ENCODE measurements at regions of chr4 and their contacts with region 1.

Region 1: GRCh38 chr4:73019462-73020047 is 50.0 kb downstream of the COX18 start:
- DNase-seq: peak; percentile 19
- H3K4me3 ChIP-seq: no peak overlapping the region
- H3K27ac ChIP-seq: no peak overlapping the region
- H3K4me1 ChIP-seq: no peaks in the 10 kb centered on the region
- H3K27me3 ChIP-seq: peaks cover 2% of the 10 kb centered on the region
- CTCF ChIP-seq: peak; percentile 62 to 64

Region 2: DNA sequence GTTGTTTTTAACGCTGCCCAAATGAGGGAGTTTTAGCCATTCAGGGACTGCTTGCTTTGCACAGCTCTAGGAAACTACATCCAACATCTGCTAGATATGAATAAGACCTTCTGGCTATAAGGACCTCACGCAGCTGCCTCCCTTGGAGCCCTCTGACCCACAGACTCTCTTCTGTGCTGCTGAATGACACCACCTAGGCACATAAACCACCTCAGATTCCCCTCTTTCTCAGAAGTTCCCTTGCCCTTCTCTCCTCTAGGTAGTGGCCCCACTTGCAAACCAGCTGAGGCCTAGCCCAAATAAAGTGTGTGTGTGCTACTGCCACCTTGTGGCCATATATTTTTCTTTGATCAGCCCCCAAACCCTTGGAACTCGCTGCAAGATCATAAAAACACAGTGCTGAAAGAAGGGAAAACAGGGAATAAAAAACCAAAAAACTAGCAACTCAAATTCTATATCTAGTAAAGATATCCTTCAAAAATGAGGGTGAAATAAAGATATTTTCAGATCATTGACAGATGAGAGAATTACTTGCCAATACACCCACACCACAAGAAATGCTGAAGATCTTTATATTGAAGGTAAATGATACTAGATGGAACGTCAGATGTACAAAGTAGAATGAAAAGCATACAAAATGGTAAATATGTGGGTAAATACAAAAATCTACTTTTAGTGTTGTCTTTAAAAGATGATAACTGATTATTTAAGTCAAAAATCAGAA is 716.4 kb before region 1 on chr4:
- CTCF ChIA-PET with region 1: no interaction called
- dilution Hi-C with region 1: no loop called
- in situ Hi-C with region 1: loop called in 1 of 2 experiments (anchors 25 kb)
- intact Hi-C with region 1: loop called (anchors 5 kb)
- DNase-seq: peak; percentile 29
- H3K4me3 ChIP-seq: no peak overlapping the region
- H3K27ac ChIP-seq: no peak overlapping the region
- H3K4me1 ChIP-seq: no peaks in the 10 kb centered on the region
- H3K27me3 ChIP-seq: no peaks in the 10 kb centered on the region
- CTCF ChIP-seq: peak; percentile 62 to 66

Region 3: DNA sequence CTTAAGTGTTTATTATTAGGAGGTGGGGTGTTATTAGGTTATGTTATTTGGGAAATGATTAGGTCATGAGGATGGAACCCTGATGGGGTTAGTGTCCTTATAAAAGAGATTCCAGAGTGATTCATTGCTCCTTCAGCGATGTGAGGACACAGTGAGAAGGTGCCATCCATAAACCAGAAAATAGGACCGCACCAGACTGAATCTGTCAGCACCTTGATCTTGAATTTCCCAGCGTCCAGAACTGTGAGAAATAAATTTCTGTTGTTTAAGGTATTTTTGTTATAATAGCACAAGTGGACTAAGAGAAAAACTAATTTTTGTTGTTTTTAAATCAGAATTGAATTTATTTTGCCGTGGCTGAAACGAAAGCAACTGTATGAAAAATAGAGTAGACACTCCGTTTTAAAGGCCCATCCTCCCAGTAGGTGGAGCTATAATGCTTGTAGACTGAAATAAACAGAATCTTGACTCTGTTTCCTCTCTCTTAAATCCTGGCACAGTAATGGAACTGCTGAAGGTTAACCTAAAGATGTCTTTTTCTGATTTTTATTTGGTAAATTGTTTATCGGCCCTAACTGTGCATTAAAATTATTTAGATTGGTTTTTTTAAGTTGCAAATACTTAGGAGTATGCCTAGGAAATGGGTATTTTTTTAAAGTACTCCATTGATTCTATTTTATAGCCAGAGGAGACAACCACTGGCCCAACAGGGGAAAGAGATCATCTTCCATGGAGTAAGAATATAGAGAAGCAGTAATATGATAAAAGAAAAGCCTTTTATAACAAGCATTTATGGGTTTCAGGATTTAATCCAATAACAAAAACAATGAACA is 317.4 kb before region 1 on chr4:
- CTCF ChIA-PET with region 1: no interaction called
- dilution Hi-C with region 1: no loop called
- in situ Hi-C with region 1: loop called in 1 of 2 experiments (anchors 10 kb)
- intact Hi-C with region 1: loop called (anchors 1 kb)
- DNase-seq: peak; percentile 40
- H3K4me3 ChIP-seq: peak overlapping the region; percentile 39 to 75 (median 57)
- H3K27ac ChIP-seq: no peak overlapping the region
- H3K4me1 ChIP-seq: no peaks in the 10 kb centered on the region
- H3K27me3 ChIP-seq: no peaks in the 10 kb centered on the region
- CTCF ChIP-seq: peak; percentile 68

Region 4: DNA sequence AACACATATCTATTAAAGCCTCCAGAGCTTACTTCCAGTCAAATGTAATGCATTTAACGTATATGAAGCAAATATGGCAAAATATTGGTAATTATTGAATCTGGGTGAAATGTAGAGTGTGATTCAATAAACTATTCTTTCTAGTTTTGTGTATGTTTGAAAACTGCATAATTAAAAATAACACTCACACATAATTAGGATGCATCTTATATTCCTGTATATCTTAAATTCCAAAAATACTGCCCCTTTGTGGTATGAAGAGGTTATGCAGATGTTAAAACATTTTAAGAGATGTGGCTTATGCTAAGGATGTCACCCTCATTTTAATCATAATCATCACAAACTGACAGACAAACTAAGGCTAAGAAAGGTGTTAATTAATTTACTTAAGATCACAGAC is 133.0 kb before region 1 on chr4:
- CTCF ChIA-PET with region 1: no interaction called
- dilution Hi-C with region 1: no loop called
- in situ Hi-C with region 1: no loop called
- intact Hi-C with region 1: loop called (anchors 2 kb)
- DNase-seq: no peak
- H3K4me3 ChIP-seq: no peak overlapping the region
- H3K27ac ChIP-seq: no peak overlapping the region
- H3K4me1 ChIP-seq: no peaks in the 10 kb centered on the region
- H3K27me3 ChIP-seq: no peaks in the 10 kb centered on the region
- CTCF ChIP-seq: peak; percentile 44 to 51

Region 5: DNA sequence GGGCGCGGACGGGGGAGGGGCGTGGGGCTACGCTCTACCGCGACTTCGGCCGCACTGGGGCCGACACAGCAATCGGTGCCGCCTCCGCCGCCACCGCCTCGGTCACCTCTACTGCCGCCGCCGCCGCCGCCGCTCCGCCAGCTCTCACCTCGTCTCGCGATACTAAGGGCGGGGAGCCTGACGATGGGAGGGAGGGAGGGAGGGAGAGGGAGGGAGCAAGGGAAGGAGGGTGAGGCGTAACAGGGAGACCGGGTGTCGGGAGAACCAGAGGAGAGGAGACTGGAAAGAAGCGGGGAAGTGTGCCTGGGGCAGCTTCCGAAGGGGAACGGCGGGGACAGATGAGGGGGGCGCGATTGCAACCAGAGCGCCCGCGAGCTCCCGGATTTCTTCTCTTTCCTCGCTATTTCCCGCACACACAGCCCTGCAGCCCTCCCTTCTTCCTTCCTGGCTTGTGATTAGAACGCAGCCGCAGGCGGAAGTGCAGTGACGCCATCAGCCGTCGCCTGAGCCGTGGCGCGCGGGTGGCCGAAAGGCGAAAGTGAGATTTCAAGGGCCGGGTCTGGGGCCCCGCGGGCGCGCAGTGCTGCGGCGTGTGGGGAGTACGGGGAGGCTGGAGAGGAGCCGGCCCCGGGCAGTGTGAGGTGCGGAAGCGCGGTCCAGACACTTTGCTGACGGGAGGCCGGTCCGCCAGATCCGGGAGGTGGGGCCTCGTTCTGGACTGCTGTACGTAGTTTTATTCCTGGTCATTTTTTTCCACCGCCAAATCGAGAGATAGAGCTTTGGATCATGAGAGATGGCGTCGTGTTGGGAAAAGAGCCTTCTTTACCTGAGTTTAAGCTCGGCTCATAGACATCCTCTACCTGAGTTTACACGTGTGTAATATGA is 239.4 kb after region 1 on chr4 and contains the start of gene ANKRD17:
- CTCF ChIA-PET with region 1: no interaction called
- dilution Hi-C with region 1: no loop called
- in situ Hi-C with region 1: no loop called
- intact Hi-C with region 1: loop called (anchors 5 kb)
- DNase-seq: peak; percentile 94
- H3K4me3 ChIP-seq: peak within 1 kb of the TSS; percentile 70 to 97 (median 96)
- H3K27ac ChIP-seq: peak within 1 kb of the TSS; percentile 97
- H3K4me1 ChIP-seq: peaks cover 12% of the 10 kb centered on the region
- H3K27me3 ChIP-seq: no peaks in the 10 kb centered on the region
- CTCF ChIP-seq: peak in 1 of 2 donors; percentile 22
- total RNA-seq, gene ANKRD17: 66.2 to 70.6 TPM

Region 6: GRCh38 chr4:73299548-73300280 is 280.2 kb after region 1 on chr4:
- CTCF ChIA-PET with region 1: no interaction called
- dilution Hi-C with region 1: no loop called
- in situ Hi-C with region 1: no loop called
- intact Hi-C with region 1: no loop called
- DNase-seq: no peak
- H3K4me3 ChIP-seq: no peak overlapping the region
- H3K27ac ChIP-seq: no peak overlapping the region
- H3K4me1 ChIP-seq: no peaks in the 10 kb centered on the region
- H3K27me3 ChIP-seq: no peaks in the 10 kb centered on the region
- CTCF ChIP-seq: no peak